ENCODE measurements at regions of chr1 and their contacts with region 1.

Region 1: DNA sequence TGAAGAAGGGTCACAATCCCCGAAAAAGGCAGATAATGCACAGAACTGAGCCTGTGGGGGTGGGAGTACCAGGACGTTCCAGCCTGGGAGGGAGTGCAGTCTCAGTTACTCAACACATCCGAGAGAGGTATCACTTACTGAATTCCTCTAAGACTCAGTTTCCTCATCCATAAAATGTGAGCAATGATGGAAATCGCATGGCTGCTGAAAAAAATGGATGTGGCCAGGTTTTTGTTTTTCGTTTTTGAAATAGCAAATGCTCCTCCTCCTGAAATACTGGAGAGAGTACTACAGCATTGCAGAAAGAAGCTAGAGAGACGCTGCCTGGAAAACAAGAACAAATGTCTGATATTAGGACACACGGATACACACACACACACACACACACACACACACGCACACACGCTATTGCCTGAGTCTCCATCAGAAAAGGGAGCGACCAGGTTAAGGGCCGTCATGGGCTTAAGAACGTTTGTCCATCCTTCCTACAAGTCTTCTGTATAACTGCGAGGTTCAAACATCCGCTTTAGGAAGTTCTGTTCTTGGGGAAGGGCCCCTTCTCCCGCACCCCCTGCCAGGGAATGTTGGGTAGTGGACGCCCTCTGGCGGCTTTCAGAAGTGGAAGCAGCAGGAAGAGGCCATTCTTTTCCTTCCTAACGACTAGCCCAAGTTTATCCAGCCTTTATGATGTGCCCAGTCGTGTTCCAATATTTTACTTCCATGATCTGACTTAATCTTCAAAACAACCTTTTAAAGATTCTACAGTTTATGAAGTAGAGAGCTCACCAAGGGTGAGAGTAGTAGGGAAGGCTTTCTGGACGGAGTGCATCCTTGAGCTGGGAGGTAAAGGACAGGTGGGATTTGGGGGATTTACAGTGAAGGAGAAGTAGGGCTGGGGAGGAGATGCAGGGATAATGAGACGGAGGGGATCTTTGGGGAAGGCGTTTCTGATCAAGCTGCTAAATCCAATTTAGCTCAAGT is 699 bp upstream of the NES start:
- DNase-seq: peak; percentile 72 to 85
- ATAC-seq: peak; percentile 72 to 84; a peak in 5 of 6 replicates
- H3K4me3 ChIP-seq: peak overlapping the region; percentile 30; the same call in 2 of the 3 replicates
- H3K27ac ChIP-seq: peak overlapping the region; percentile 68 to 75
- H3K4me1 ChIP-seq: peaks cover 13% of the 10 kb centered on the region
- CTCF ChIP-seq: peak; percentile 96
- EP300 ChIP-seq: no peak
- POLR2A ChIP-seq: no peak
- RAD21 ChIP-seq: peak; percentile 94 to 96

Region 2: DNA sequence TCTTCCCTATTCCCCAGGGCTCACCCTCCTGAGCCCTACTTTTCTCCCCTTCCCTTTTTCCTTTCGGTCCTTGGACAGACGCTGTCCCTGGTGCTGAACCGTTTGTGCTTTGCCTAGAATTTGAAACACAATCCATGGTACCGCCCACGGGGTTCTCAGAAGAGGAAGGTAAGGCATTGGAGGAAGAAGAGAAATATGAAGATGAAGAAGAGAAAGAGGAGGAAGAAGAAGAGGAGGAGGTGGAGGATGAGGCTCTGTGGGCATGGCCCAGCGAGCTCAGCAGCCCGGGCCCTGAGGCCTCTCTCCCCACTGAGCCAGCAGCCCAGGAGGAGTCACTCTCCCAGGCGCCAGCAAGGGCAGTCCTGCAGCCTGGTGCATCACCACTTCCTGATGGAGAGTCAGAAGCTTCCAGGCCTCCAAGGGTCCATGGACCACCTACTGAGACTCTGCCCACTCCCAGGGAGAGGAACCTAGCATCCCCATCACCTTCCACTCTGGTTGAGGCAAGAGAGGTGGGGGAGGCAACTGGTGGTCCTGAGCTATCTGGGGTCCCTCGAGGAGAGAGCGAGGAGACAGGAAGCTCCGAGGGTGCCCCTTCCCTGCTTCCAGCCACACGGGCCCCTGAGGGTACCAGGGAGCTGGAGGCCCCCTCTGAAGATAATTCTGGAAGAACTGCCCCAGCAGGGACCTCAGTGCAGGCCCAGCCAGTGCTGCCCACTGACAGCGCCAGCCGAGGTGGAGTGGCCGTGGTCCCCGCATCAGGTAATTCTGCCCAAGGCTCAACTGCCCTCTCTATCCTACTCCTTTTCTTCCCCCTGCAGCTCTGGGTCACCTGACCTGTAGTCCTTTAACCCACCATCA is 25.5 kb before region 1 on chr1:
- CTCF ChIA-PET with region 1: interaction called, 402 read pairs
- POLR2A ChIA-PET with region 1: no interaction called
- DNase-seq: no peak
- ATAC-seq: no peak
- H3K4me3 ChIP-seq: no peak overlapping the region
- H3K27ac ChIP-seq: no peak overlapping the region
- H3K4me1 ChIP-seq: 0 out of 3 replicates have a peak, but pooled peaks cover 7% of the 10 kb centered on the region
- CTCF ChIP-seq: no peak
- EP300 ChIP-seq: no peak
- POLR2A ChIP-seq: no peak
- RAD21 ChIP-seq: no peak